PC-3 (cell line): ENCODE measurements at regions of chr9 and their contacts with region 1.

Region 1: DNA sequence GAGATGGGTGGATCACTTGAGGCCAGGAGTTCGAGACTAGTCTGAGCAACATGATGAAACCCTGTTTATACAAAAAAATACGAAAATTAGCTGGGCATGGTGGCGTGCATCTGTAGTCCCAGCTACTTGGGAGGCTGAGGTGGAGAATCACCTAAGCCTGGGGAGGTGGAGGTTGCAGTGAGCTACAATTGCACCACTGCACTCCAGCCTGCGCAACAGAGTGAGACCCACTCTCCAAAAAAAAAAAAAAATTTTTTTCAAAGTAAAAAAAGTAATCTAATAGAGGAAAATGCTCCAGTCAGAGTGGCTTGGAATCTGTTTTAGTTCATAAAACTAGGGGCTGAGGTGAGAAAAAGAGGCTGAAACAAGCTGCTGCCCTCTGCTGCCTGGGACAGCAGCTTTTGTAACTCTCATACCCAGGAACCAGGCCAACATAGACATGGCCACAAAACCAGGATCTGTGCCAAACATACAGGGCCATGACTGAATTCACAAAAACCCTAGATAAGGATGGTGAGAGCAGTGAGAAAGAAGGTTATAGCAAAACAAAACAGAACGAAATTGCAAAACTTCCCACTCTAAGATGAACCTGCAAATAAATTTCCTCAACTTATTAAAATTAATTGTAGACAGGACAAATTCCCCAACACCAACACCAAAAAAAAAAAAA is 13.1 kb upstream of the DCAF12 start:
- DNase-seq: peak; percentile 64
- ATAC-seq: peak; percentile 66
- H3K4me3 ChIP-seq: no peak overlapping the region
- H3K27ac ChIP-seq: no peak overlapping the region
- H3K4me1 ChIP-seq: no peaks in the 10 kb centered on the region
- H3K27me3 ChIP-seq: no peaks in the 10 kb centered on the region
- CTCF ChIP-seq: peak; percentile 48

Region 2: GRCh38 chr9:34072868-34073590 is 66.6 kb before region 1 on chr9:
- CTCF ChIA-PET with region 1: no interaction called
- POLR2A ChIA-PET with region 1: interaction called, 12 read pairs
- intact Hi-C with region 1: no loop called
- DNase-seq: peak; percentile 84
- ATAC-seq: peak; percentile 90
- H3K4me3 ChIP-seq: no peak overlapping the region
- H3K27ac ChIP-seq: peak overlapping the region; percentile 9; the same call in 1 of the 2 replicates
- H3K4me1 ChIP-seq: peaks cover 26% of the 10 kb centered on the region
- H3K27me3 ChIP-seq: no peaks in the 10 kb centered on the region
- CTCF ChIP-seq: no peak

Region 3: DNA sequence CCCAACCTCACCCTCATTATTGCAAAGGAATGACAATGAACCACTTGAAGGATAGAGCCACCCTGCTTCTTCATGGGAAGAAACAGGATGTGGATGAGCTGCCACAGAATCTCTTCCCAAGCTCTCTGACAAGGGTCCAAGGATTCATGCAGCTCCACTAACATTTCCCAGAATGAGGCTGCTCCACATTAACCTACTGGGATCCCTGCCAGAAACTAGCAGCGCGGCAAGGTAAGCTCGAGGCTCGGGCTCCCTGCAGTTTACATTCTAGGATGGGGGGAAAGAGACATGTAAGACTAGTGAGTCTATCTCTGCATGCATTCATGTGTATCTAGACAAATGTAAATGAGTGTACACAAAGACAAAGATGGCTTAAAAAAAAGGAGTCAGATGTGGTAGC is 25.2 kb before region 1 on chr9:
- CTCF ChIA-PET with region 1: no interaction called
- POLR2A ChIA-PET with region 1: no interaction called
- intact Hi-C with region 1: no loop called
- DNase-seq: no peak
- ATAC-seq: no peak
- H3K4me3 ChIP-seq: no peak overlapping the region
- H3K27ac ChIP-seq: no peak overlapping the region
- H3K4me1 ChIP-seq: no peaks in the 10 kb centered on the region
- H3K27me3 ChIP-seq: no peaks in the 10 kb centered on the region
- CTCF ChIP-seq: no peak

Region 4: GRCh38 chr9:34126207-34127034 is 13.2 kb before region 1 on chr9 and contains the start of gene DCAF12:
- CTCF ChIA-PET with region 1: no interaction called
- POLR2A ChIA-PET with region 1: no interaction called
- intact Hi-C with region 1: no loop called
- DNase-seq: peak; percentile 86
- ATAC-seq: peak; percentile 86
- H3K4me3 ChIP-seq: peak within 1 kb of the TSS; percentile 78
- H3K27ac ChIP-seq: peak within 1 kb of the TSS; percentile 64
- H3K4me1 ChIP-seq: peaks cover 14% of the 10 kb centered on the region
- H3K27me3 ChIP-seq: no peaks in the 10 kb centered on the region
- CTCF ChIP-seq: no peak
- total RNA-seq, gene DCAF12: 12.9 and 16.1 TPM in 2 replicates

Region 5: DNA sequence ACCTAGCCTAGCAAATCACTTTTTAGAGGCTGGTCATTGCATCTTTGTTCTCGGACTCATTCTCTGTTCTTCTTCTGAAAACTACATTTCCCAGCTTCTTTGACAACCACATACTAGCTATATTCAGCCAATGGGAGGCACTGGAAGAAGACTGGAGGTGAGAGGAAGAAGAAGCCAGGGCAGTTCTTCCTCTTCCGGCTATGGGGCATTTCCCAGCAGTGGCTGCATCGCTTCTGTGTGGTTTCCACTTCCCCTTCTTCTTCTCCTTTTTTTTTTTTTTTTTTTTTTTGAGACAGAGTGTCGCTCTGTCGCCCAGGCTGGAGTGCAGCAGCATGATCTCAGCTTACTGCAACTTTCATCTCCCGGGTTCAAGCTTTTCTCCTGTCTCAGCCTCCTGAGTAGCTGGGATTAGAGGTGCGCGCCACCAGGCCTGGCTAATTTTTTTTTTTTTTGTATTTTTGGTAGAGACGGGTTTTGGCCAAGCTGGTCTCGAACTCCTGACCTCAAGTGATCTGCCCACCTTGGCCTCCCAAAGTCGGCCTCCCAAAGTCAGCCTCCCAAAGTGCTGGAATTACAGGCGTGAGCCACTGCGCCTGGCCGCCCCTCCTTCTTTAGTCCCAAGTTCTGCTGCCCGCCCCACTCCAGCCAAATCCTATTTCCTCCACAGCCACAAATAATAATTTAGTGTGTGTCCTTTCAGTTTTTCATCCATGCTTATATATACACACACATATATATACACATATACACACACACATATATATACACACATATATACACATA is 32.3 kb after region 1 on chr9:
- CTCF ChIA-PET with region 1: no interaction called
- POLR2A ChIA-PET with region 1: interaction called, 13 read pairs
- intact Hi-C with region 1: no loop called
- DNase-seq: no peak
- ATAC-seq: no peak
- H3K4me3 ChIP-seq: no peak overlapping the region
- H3K27ac ChIP-seq: no peak overlapping the region
- H3K4me1 ChIP-seq: peaks cover 3% of the 10 kb centered on the region; the same call in 1 of the 2 replicates
- H3K27me3 ChIP-seq: no peaks in the 10 kb centered on the region
- CTCF ChIP-seq: no peak